Activated naive CD4-positive, alpha-beta T cell treated with anti-CD3 and anti-CD28 coated beads for 36 hours (primary cell): ENCODE measurements at regions of chr11 and their contacts with region 1.

Region 1: DNA sequence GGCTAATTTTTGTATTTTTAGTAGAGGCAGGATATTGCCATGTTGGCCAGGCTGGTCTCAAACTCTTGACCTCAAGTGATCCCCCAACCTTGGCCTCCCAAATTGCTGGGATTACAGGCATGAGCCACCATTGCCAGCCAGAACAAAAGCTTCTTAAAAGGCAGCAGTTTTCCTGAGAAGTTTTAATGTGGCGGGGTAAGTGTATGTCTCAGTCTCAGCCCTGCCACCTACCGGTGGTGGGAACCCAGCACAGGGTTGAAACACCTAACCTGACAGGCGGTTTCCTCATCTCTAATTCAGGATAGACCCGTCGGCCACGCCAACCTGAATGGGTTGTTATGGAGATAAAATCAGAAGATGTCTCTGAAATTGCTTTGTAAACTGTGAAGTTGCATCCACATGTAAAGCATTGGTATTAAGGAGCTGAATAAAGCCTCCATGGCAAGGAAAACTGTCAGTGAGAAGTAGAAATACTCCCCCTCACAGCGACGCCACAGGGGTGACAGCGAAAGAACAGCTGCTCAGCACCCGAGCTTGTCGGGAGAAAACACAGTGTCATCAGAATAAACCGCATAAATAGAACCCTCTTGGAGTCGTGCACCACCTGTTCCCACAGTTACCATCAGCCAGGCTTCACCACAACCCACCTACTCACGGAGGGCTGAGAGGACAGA is 165.9 kb upstream of the NCAM1 start:
- DNase-seq: peak; percentile 55
- H3K4me3 Mint-ChIP-seq: no peak overlapping the region
- H3K27ac Mint-ChIP-seq: no peak overlapping the region
- H3K4me1 Mint-ChIP-seq: peaks cover 4% of the 10 kb centered on the region
- H3K27me3 Mint-ChIP-seq: peaks cover 2% of the 10 kb centered on the region

Region 2: DNA sequence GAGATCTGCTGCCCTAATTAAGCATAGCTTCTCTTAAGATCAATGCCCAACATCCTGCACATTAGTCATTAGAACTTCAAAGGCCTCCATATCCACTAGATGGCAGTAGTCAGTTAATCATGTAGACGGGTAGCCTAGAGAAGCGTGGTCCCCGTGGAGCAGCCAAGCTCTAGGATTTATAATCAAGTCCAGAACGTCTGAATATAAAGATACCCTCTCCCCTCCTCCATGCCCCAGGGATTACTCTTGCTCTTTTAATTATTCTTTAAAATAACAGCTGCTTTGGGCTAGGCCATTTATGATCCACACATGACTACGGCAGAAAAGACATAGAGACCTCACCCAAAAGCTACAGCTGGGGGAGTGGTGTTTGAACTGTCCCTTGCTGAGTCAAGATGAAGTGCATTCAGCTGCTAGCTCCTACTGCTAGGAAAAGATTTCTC is 207.0 kb before region 1 on chr11:
- CTCF ChIA-PET with region 1: interaction called, 18 read pairs
- intact Hi-C with region 1: loop called (anchors 1 kb)
- DNase-seq: peak; percentile 58
- H3K4me3 Mint-ChIP-seq: no peak overlapping the region
- H3K27ac Mint-ChIP-seq: no peak overlapping the region
- H3K4me1 Mint-ChIP-seq: no peaks in the 10 kb centered on the region
- H3K27me3 Mint-ChIP-seq: no peaks in the 10 kb centered on the region

Region 3: GRCh38 chr11:113281052-113281725 is 485.9 kb after region 1 on chr11:
- CTCF ChIA-PET with region 1: no interaction called
- intact Hi-C with region 1: loop called (anchors 2 kb)
- DNase-seq: no peak
- H3K4me3 Mint-ChIP-seq: no peak overlapping the region
- H3K27ac Mint-ChIP-seq: no peak overlapping the region
- H3K4me1 Mint-ChIP-seq: no peaks in the 10 kb centered on the region
- H3K27me3 Mint-ChIP-seq: no peaks in the 10 kb centered on the region